Aorta (tissue), 5 donors: ENCODE measurements at regions of chr9 and their contacts with region 1.

Region 1: GRCh38 chr9:104093647-104094533 is at the start of gene SMC2:
- DNase-seq: peak; percentile 96 to 98
- ATAC-seq: peak; percentile 99
- H3K4me3 ChIP-seq: peak within 1 kb of the TSS; percentile 85 to 99
- H3K27ac ChIP-seq: peak within 1 kb of the TSS; percentile 90 to 93
- H3K4me1 ChIP-seq: peaks cover 0 to 5% of the 10 kb centered on the region in 2 donors
- H3K27me3 ChIP-seq: no peaks in the 10 kb centered on the region
- total RNA-seq, gene SMC2: 6.3 to 8.8 TPM

Region 2: GRCh38 chr9:103301051-103301450 is 792.8 kb before region 1 on chr9:
- intact Hi-C with region 1: no loop called
- DNase-seq: no peak
- ATAC-seq: no peak
- H3K4me3 ChIP-seq: no peak overlapping the region
- H3K27ac ChIP-seq: no peak overlapping the region
- H3K4me1 ChIP-seq: no peaks in the 10 kb centered on the region
- H3K27me3 ChIP-seq: no peaks in the 10 kb centered on the region

Region 3: DNA sequence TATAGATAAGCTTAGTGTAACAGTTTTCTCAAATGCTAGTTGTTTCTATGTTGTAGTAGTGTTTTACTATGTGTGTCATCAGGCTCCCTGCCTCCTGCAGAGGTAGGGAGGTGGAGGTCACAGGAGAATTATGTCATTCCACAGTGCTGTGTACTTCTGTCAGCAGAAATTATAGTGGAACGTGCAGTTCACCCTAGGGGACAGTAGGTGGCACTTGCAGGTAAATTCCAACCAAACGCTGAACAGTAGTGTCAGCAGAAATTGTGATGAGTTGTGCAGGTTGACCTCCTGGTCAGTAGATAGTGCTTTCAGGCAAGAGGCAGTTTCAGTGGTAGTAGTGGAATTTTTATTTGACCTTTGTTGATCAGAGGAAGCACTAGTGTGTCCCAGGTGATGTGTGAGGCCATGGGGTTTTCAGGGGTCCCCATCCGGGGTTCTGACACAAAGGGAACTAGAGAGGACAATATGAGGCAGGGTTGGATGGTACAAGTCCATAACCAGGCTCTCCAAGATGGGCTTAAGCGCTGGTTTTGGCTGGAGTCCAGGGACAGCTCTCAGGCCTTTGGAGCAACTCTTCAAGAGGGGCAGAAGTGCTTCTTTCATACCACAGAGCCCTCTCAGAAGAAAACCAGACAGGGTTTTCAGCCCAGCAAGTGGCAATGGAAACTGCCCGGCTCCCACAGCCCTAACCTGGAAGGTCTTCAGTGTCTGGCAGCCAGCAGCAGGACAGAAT is 695.9 kb before region 1 on chr9:
- intact Hi-C with region 1: loop called in 1 of 2 experiments (anchors 10 kb)
- DNase-seq: no peak
- ATAC-seq: peak; percentile 59
- H3K4me3 ChIP-seq: no peak overlapping the region
- H3K27ac ChIP-seq: no peak overlapping the region
- H3K4me1 ChIP-seq: no peaks in the 10 kb centered on the region
- H3K27me3 ChIP-seq: no peaks in the 10 kb centered on the region

Region 4: DNA sequence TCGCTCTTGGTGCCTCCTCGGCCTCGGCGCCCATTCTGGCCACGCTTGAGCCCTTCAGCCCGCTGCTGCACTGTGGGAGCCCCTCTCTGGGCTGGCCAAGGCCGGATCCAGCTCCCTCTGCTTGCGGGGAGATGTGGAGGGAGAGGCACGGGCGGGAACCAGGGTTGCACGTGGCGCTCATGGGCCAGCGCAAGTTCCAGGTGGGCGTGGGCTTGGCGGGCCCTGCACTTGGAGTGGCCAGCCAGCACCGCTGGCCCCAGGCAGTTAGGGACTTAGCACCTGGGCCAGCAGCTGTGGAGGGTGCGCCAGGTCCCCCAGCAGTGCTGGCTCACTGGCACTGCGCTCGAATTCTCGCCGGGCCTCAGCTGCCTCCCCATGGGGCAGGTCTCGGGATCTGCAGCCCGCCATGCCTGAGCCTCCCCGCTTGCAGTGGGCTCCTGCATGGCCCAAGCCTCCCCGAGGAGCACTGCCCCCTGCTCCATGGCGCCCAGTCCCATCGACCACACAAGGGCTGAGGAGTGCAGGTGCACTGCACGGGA is 106.6 kb after region 1 on chr9:
- intact Hi-C with region 1: no loop called
- DNase-seq: peak in 1 of 2 donors; percentile 56
- ATAC-seq: no peak
- H3K4me3 ChIP-seq: no peak overlapping the region
- H3K27ac ChIP-seq: no peak overlapping the region
- H3K4me1 ChIP-seq: no peaks in the 10 kb centered on the region
- H3K27me3 ChIP-seq: no peaks in the 10 kb centered on the region

Region 5: DNA sequence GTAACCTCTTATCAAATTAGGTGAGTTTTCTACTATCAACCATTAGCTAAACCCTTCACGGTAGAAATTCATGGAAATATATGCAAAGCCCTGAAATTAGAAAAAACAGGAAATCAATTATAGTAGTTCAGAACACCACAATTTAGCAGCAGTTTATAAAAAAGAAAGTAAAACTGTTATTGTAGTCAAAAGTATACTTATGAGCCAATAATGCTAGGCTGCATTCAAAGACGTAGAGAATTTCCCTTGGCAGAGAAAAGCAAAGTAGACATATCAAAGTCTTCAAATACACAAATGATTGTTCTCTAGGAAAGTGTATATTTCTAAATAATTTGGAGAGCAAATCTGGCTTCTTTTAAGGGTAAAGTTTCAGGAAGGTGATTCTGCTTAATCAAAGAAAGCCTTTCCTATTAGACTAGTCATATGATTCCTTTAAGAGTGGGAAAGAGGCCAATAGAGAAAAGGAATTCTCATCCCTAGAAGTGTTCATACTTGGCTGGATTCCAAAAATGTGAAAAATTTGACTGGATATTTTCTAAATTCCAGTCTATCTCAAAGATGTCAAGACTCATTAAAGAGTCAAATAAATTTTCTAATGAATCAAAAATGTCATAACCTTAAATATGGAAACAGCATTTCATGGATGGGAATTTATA is 185.8 kb after region 1 on chr9:
- intact Hi-C with region 1: loop called in 1 of 2 experiments (anchors 10 kb)
- DNase-seq: no peak
- ATAC-seq: no peak
- H3K4me3 ChIP-seq: peak overlapping the region in 1 of 2 donors; percentile 36
- H3K27ac ChIP-seq: no peak overlapping the region
- H3K4me1 ChIP-seq: no peaks in the 10 kb centered on the region
- H3K27me3 ChIP-seq: no peaks in the 10 kb centered on the region

Region 6: DNA sequence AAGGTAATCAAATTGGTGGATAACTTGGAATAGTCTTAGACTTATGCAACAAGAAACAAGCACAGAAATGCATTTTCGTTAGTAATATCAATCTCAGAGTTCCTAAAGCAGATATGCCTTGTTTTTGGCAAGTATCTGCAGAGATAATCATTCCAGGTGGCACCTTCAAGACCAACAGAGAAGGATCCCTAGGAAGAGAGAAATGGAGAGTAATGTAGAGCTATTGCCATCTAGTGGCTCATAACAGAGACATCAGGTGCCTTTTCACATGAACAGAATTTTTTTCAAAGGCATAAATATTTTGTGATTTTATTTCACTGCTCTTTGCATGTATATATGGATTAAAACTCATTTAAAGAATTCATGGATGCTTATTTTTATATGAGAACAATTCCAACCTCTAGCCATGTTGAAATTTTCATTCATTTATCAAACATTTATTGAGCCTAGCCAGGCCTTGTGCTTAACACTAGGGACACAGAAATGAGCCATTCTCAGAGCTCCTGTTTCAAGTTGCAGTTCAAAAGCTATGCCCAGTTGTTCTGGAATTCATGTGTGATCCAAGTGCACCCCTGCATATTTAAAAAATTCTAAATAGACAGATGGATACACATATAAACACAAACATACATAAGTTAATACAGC is 292.7 kb after region 1 on chr9:
- intact Hi-C with region 1: loop called in 1 of 2 experiments (anchors 10 kb)
- DNase-seq: no peak
- ATAC-seq: no peak
- H3K4me3 ChIP-seq: no peak overlapping the region
- H3K27ac ChIP-seq: no peak overlapping the region
- H3K4me1 ChIP-seq: peaks cover 0 to 8% of the 10 kb centered on the region in 2 donors
- H3K27me3 ChIP-seq: no peaks in the 10 kb centered on the region

Region 7: GRCh38 chr9:104747558-104748358 is 653.9 kb after region 1 on chr9 and contains the start of gene NIPSNAP3A:
- intact Hi-C with region 1: loop called in 1 of 2 experiments (anchors 5 kb)
- DNase-seq: peak; percentile 92 to 94
- ATAC-seq: peak; percentile 96
- H3K4me3 ChIP-seq: peak within 1 kb of the TSS; percentile 69 to 98
- H3K27ac ChIP-seq: peak within 1 kb of the TSS; percentile 77 to 92
- H3K4me1 ChIP-seq: no peaks in the 10 kb centered on the region
- H3K27me3 ChIP-seq: no peaks in the 10 kb centered on the region
- total RNA-seq, gene NIPSNAP3A: 24.2 to 28.7 TPM